ENCODE measurements at regions of chr1 and their contacts with region 1.

Region 1: DNA sequence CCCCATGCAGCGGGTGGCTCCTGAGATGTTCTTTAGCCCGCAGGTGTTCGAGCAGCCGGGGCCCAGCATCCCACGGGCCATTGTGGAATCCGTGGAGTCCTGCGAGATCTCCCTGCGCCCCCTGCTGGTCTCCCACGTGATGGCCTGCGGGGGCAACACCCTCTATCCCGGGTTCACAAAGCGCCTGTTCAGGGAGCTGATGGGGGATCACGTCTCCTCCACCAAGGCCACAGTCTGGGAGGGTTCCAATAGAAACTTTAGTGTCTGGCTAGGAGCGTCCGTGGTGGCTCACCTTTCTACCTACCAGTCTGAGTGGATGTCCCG is 71.0 kb downstream of the ACTL8 start:
- DNase-seq: no peak
- H3K4me3 ChIP-seq: no peak overlapping the region
- H3K27ac ChIP-seq: no peak overlapping the region
- H3K27me3 ChIP-seq: peaks cover 7% of the 10 kb centered on the region
- CTCF ChIP-seq: peak; percentile 68

Region 2: GRCh38 chr1:17653728-17654351 is 172.3 kb before region 1 on chr1:
- CTCF ChIA-PET with region 1: interaction called, 17 read pairs
- POLR2A ChIA-PET with region 1: no interaction called
- DNase-seq: peak; percentile 18
- H3K4me3 ChIP-seq: no peak overlapping the region
- H3K27ac ChIP-seq: no peak overlapping the region
- H3K27me3 ChIP-seq: no peaks in the 10 kb centered on the region
- CTCF ChIP-seq: peak; percentile 89